Sigmoid colon (tissue), 7 donors: ENCODE measurements at regions of chr14 and their contacts with region 1.

Region 1: GRCh38 chr14:77040059-77040740 is 11.7 kb upstream of the IRF2BPL start:
- DNase-seq: peak; percentile 100
- H3K4me3 ChIP-seq: peak overlapping the region; percentile 6 to 37 (median 32)
- H3K27ac ChIP-seq: peak overlapping the region; percentile 96 to 100 (median 98)
- H3K4me1 ChIP-seq: peaks cover 0 to 90% (median 86%) of the 10 kb centered on the region in 4 donors
- H3K27me3 ChIP-seq: no peaks in the 10 kb centered on the region
- CTCF ChIP-seq: no peak
- EP300 ChIP-seq: peak; percentile 41 to 70 (median 54)
- POLR2A ChIP-seq: no peak

Region 2: DNA sequence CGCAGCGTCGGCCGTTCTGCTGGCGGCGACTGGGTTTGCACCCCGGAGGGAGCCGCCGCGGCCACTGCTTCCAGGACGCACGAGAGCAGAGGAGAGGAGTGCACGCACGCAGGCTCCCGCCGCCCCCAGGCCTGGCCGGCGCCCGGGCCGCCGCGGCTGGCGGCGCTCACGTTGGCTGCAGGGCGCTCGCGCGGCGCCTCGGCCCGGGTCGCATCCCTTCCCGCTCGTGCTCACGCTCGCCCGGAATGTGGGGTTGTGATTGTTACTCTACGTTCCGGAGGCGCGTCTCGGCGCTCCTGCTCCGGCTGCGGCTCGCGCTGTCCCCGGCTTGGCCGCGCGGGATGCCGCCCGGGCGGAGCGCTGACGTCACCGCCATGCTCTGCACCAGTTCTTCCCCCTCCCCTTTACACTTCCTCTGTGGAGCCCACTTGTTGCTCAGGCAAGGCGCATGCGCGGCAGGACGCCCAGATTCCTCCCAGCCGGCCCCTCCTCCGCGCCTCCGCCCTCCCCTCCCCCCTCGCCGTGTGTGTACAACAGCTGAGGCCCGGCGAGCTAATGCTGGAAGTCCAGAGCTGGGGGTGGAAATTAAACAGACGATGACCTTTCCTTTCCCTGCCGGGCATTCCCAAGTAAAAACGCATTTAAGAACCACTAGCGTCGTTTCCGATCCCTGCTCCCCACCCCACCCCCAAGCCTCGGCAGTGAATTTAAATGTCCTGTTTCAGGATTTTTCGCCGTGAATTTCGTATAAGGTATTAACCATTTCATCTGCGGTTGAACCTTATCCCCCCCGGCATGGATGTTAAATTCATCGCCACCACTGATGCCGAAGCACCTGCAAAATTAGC is 11.6 kb before region 1 on chr14 and contains the start of gene IRF2BPL:
- intact Hi-C with region 1: loop called (anchors 1 kb)
- DNase-seq: peak; percentile 100
- H3K4me3 ChIP-seq: peak within 1 kb of the TSS; percentile 85 to 96 (median 91)
- H3K27ac ChIP-seq: peak within 1 kb of the TSS; percentile 97 to 100 (median 100)
- H3K4me1 ChIP-seq: peaks cover 0 to 69% (median 52%) of the 10 kb centered on the region in 4 donors
- H3K27me3 ChIP-seq: no peaks in the 10 kb centered on the region
- CTCF ChIP-seq: no peak
- EP300 ChIP-seq: peak in 3 of 4 donors; percentile 71 to 94 (median 80)
- POLR2A ChIP-seq: peak; percentile 86 to 92
- total RNA-seq, gene IRF2BPL: 34.7 to 63.1 (median 57.9) TPM